ENCODE measurements at regions of chr7 and their contacts with region 1.

Region 1: DNA sequence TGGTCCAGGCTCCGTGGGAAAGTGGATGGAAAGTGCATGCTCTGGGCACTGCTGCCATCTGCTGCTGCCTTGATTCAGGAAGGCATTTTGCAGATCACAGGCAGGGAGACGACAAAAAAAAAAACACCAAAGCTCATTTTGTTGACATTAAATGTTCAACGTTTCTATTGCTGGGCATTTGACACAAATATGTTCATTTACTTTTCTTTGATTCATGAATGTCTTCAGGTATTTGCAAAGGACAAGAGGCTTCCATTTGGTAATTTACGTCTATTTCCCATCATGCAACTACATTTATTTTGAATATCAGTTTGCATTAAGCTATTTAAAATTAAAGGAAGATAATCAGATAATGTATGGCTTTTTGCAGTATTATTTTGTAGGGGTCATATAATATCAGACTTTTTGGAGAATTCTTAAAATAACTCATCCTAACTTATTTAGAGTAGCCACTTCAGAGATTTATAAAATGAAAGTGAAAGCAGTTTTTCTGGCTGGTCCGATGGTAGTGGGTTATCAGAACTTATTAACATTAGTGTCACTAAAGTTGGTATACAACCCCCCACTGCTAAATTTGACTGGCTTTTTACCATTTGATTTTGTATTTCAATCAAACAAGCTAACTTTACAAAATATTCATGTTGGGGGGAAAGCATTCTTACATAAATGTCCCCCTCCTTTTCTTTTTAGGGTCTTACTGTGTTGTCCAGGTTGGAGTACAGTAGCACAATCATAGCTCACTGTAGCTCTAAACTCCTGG is 65.3 kb downstream of the PDIA4 start:
- DNase-seq: peak in 4 of 5 donors; percentile 68 to 76 (median 72)
- ATAC-seq: peak; percentile 81 to 85 (median 84)
- H3K4me3 ChIP-seq: peak overlapping the region; percentile 34 to 79 (median 61)
- H3K27ac ChIP-seq: peak overlapping the region; percentile 5 to 87 (median 71)
- H3K4me1 ChIP-seq: peaks cover 0 to 25% (median 8%) of the 10 kb centered on the region in 12 donors
- H3K27me3 ChIP-seq: no peaks in the 10 kb centered on the region
- CTCF ChIP-seq: peak; percentile 39 to 94 (median 76)
- POLR2A ChIP-seq: no peak

Region 2: DNA sequence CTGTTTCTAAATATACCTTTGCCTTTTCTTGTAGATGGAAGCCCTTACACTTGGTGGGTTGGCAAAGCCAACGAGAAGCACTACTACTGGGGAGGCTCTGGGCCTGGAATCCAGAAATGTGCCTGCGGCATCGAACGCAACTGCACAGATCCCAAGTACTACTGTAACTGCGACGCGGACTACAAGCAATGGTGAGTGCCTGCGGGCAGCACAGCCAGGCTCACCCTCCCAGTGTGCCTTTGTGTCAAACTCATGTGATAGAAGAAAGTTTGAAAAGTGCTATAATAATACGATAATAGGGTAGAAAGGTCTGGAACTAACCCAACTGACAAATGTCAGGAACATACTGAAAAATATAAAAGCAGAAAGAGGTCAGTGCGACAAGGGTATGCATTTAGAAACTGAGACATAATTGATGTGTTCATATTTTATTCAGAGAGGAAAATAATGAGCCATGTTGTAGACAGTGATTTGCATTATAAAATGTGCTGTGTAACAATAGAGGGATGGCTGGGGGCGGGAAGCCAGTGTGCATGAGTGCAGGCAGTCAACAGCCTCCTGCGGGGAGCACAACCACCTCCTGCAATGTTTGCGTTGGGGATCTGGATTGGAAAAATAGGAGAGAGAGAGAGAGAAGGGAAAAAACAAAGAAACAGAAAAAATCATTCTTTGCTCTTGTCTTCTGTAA is 1059.3 kb before region 1 on chr7:
- intact Hi-C with region 1: no loop called
- DNase-seq: no peak
- ATAC-seq: no peak
- H3K4me3 ChIP-seq: no peak overlapping the region
- H3K27ac ChIP-seq: no peak overlapping the region
- H3K4me1 ChIP-seq: no peaks in the 10 kb centered on the region
- H3K27me3 ChIP-seq: peaks cover 0 to 4% (median 0%) of the 10 kb centered on the region in 9 donors
- CTCF ChIP-seq: no peak
- POLR2A ChIP-seq: no peak

Region 3: DNA sequence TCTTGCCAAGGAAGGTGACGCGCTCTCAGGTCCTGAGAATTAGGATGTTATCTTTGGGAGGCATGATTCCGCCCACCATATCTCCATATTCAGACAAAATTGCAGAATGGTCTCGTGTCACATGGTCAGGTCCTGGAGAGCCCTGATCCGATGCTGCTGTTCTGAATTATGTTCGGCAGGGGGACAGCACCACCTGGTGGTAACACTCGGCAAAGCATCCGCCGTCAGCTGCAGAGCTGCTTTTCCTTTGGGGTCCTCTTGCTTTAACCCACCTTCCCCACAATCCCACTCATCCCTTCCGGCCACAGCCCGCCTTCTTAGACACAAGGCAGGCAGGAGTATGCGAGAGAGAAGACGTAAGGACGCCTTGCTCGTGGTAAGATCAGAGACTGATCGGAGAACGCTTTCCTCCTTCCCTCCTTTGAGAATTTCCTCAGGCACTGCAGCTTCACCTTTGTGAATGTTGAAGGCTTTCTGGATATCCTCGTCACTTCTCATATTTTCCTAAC is 700.2 kb before region 1 on chr7:
- intact Hi-C with region 1: loop called in 5 of 10 experiments (anchors 2 to 10 kb)
- DNase-seq: peak; percentile 37 to 64 (median 49)
- ATAC-seq: peak; percentile 53 to 83 (median 78)
- H3K4me3 ChIP-seq: peak overlapping the region in 1 of 12 donors; percentile 13
- H3K27ac ChIP-seq: no peak overlapping the region
- H3K4me1 ChIP-seq: peaks cover 0 to 8% (median 0%) of the 10 kb centered on the region in 12 donors
- H3K27me3 ChIP-seq: peaks cover 0 to 14% (median 3%) of the 10 kb centered on the region in 9 donors
- CTCF ChIP-seq: peak; percentile 83 to 99 (median 93)
- POLR2A ChIP-seq: no peak

Region 4: GRCh38 chr7:148575640-148576411 is 387.2 kb before region 1 on chr7:
- intact Hi-C with region 1: loop called (anchors 1 to 5 kb)
- DNase-seq: peak; percentile 43 to 73 (median 59)
- ATAC-seq: peak in 3 of 4 donors; percentile 62 to 70 (median 68)
- H3K4me3 ChIP-seq: no peak overlapping the region
- H3K27ac ChIP-seq: no peak overlapping the region
- H3K4me1 ChIP-seq: peaks cover 0 to 9% (median 0%) of the 10 kb centered on the region in 12 donors
- H3K27me3 ChIP-seq: no peaks in the 10 kb centered on the region
- CTCF ChIP-seq: peak; percentile 68 to 86 (median 78)
- POLR2A ChIP-seq: no peak

Region 5: GRCh38 chr7:148856891-148857290 is 106.1 kb before region 1 on chr7:
- intact Hi-C with region 1: loop called in 6 of 10 experiments (anchors 2 to 10 kb)
- DNase-seq: no peak
- ATAC-seq: no peak
- H3K4me3 ChIP-seq: no peak overlapping the region
- H3K27ac ChIP-seq: no peak overlapping the region
- H3K4me1 ChIP-seq: peaks cover 0 to 9% (median 0%) of the 10 kb centered on the region in 12 donors
- H3K27me3 ChIP-seq: no peaks in the 10 kb centered on the region
- CTCF ChIP-seq: no peak
- POLR2A ChIP-seq: no peak

Region 6: DNA sequence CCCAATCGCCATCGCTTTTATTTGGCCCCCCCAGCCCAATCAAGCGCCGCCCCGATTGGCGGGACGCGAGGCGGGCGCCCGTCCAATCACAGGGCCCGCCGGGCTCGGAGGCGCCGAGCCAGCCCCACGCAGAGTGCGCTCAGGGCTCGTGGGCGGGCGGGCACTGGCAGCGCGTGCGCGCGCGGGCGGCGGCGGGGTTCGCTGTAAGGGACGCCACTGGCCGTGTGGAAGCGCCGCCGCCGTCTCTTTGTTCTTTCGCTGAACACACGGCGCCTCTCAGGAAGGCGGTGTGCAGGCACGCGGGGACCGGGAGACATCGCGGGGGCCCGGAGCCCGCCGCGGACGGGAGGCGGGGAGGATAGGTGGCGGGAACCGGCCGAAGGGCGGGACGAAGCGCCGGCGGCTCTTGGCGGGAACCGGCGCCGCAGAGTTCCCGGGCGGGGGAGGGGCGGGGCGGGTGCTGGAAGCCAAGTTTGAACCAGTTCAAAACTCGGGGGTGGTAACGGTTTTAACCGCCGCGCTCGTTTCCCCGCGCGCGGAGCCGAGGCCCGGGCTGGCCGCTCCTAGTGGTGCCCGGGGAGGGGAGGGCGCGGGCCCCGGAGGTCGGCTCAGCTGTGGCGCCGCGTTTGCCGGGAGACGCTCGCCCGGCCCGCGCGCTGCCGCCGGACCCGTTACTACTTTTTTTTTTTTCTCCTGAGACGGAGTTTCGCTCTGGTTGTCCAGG is 78.5 kb before region 1 on chr7:
- intact Hi-C with region 1: loop called in 6 of 10 experiments (anchors 2 to 10 kb)
- DNase-seq: peak; percentile 93 to 97 (median 94)
- ATAC-seq: peak; percentile 98 to 100 (median 99)
- H3K4me3 ChIP-seq: peak overlapping the region; percentile 65 to 99 (median 93)
- H3K27ac ChIP-seq: peak overlapping the region; percentile 77 to 98 (median 92)
- H3K4me1 ChIP-seq: peaks cover 0 to 17% (median 4%) of the 10 kb centered on the region in 12 donors
- H3K27me3 ChIP-seq: no peaks in the 10 kb centered on the region
- CTCF ChIP-seq: no peak
- POLR2A ChIP-seq: peak in 1 of 2 donors; percentile 83

Region 7: GRCh38 chr7:148987010-148987750 is 24.2 kb after region 1 on chr7:
- intact Hi-C with region 1: loop called in 1 of 10 experiments (anchors 2 kb)
- DNase-seq: peak; percentile 77 to 85 (median 81)
- ATAC-seq: peak; percentile 92
- H3K4me3 ChIP-seq: peak overlapping the region; percentile 56 to 84 (median 71)
- H3K27ac ChIP-seq: peak overlapping the region; percentile 53 to 92 (median 77)
- H3K4me1 ChIP-seq: peaks cover 4 to 53% (median 25%) of the 10 kb centered on the region in 12 donors
- H3K27me3 ChIP-seq: no peaks in the 10 kb centered on the region
- CTCF ChIP-seq: no peak
- POLR2A ChIP-seq: peak in 1 of 2 donors; percentile 37

Region 8: DNA sequence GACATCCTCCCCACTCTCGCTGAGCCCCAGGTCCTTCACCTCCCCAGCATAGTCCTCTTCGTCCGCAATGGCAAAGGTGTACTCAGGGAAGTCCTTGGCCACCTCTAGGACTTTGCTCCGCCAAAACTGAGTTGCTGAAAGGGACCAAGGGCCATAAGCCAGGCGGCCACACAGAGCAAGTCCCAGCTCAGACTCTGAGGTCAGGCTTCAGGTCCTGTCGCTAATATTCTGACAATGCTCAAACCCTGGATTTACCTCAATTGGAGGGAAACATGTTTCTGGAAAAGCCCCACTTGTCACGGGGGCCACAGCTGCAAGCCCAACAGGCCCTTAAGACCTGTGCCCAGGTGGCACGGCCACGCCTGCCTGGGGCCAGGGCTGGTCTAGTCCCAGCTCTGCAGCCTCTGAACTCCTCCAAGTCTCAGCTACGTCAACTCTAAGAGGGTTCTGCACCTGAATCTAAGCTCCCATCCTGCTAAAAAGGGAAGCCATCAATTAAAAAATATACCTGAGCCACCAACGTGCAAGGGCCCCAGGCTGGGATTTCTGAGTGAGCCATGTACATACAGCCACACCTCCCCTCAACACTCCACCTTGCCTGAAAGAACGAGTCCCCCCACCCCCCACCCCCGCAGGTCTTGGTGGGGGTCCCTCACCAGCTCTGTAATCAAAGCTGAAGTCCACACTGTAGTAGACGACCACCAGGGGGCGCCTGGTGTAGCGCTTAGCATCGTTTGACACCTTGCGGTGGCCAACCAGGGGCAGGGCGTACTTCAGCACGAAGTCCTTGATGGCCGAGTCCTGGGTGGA is 42.4 kb after region 1 on chr7:
- intact Hi-C with region 1: no loop called
- DNase-seq: peak; percentile 79 to 90 (median 83)
- ATAC-seq: peak; percentile 63 to 88 (median 82)
- H3K4me3 ChIP-seq: no peak overlapping the region
- H3K27ac ChIP-seq: no peak overlapping the region
- H3K4me1 ChIP-seq: no peaks in the 10 kb centered on the region
- H3K27me3 ChIP-seq: no peaks in the 10 kb centered on the region
- CTCF ChIP-seq: peak; percentile 78 to 90 (median 84)
- POLR2A ChIP-seq: no peak

Measured in heart left ventricle (tissue), 16 donors.